ENCODE measurements at regions of chr18 and their contacts with region 1.

Region 1: GRCh38 chr18:75455249-75456198 is 28.0 kb upstream of the SMIM21 start:
- DNase-seq: no peak
- ATAC-seq: peak; percentile 32
- H3K4me3 ChIP-seq: no peak overlapping the region
- H3K4me1 ChIP-seq: no peaks in the 10 kb centered on the region
- CTCF ChIP-seq: no peak

Region 2: DNA sequence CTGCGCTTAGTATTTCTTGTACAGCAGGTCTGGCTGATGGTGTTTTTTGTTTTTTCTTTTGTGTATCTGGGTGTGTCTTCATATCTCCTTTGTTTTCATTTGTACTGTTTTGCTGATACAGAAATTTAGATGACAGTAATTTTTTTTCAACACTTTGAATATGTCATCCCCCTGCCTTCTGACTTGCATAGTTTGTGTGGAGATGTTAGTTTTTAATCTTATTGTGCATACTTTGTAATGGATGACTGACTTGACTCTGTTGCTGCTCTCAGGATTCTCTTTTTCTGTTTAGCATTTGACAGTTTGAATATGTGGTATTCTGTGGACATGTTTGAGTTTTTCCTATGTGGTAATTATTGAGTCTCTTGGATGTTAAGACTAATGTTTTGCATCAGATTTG is 696.5 kb before region 1 on chr18:
- intact Hi-C with region 1: loop called in 1 of 2 experiments (anchors 10 kb)
- DNase-seq: no peak
- ATAC-seq: no peak
- H3K4me3 ChIP-seq: no peak overlapping the region
- H3K4me1 ChIP-seq: no peaks in the 10 kb centered on the region
- CTCF ChIP-seq: no peak